CD8-positive, alpha-beta T cell (primary cell): ENCODE measurements at regions of chr7 and their contacts with region 1.

Region 1: DNA sequence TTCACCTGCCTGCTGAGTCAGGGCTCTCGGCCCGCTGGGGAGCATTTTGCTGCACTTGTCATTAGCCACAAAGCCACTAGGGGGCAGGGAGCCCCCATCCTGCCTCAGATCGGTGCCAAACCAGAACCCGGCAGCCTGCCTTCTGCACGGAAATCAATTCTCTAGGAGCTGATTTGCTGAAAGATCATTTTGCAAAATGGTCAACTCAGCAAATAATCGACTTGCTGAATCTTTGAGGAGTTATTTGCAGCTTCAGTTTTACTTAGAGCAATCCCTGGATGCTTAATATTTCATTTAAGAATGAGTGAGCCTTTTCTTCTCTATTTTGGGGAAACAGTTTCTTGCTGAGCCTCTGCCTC is 1.7 kb upstream of the GIMAP8 start:
- DNase-seq: peak; percentile 75 to 94 (median 89)
- ATAC-seq: peak; percentile 59
- H3K4me3 ChIP-seq: peak overlapping the region; percentile 9 to 32
- H3K4me3 Mint-ChIP-seq: peak overlapping the region; percentile 99
- H3K27ac ChIP-seq: peak overlapping the region; percentile 67 to 82
- H3K27ac Mint-ChIP-seq: peak overlapping the region; percentile 95
- H3K4me1 ChIP-seq: peaks cover 31% of the 10 kb centered on the region
- H3K4me1 Mint-ChIP-seq: peaks cover 58% of the 10 kb centered on the region
- H3K27me3 ChIP-seq: no peaks in the 10 kb centered on the region
- H3K27me3 Mint-ChIP-seq: no peaks in the 10 kb centered on the region
- CTCF ChIP-seq: peak; percentile 90

Region 2: DNA sequence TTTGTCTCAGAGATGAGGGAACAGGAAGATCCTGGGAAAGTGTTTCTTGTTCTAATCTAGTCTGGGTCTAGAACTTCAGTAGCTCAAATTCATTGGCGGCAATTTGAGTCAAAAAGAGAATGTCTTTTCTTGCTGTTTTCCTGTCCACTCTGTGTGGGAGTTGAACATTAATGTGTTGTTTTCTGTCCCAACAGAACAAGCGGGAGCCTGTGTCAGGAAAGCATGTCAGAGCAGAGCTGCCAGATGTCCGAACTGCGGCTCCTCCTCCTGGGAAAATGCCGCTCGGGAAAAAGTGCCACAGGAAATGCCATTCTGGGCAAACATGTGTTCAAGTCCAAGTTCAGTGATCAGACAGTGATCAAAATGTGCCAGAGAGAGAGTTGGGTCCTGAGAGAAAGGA is 17.7 kb after region 1 on chr7:
- CTCF ChIA-PET with region 1: interaction called, 10 read pairs
- POLR2A ChIA-PET with region 1: interaction called, 14 read pairs
- intact Hi-C with region 1: loop called in 1 of 2 experiments (anchors 2 kb)
- DNase-seq: no peak
- ATAC-seq: no peak
- H3K4me3 ChIP-seq: no peak overlapping the region
- H3K4me3 Mint-ChIP-seq: peak overlapping the region; percentile 23
- H3K27ac ChIP-seq: peak overlapping the region in 1 of 2 experiments; percentile 17
- H3K27ac Mint-ChIP-seq: peak overlapping the region; percentile 53
- H3K4me1 ChIP-seq: peaks cover 73% of the 10 kb centered on the region
- H3K4me1 Mint-ChIP-seq: peaks cover 82% of the 10 kb centered on the region
- H3K27me3 ChIP-seq: no peaks in the 10 kb centered on the region
- H3K27me3 Mint-ChIP-seq: no peaks in the 10 kb centered on the region
- CTCF ChIP-seq: no peak

Region 3: GRCh38 chr7:150502519-150502918 is 53.8 kb after region 1 on chr7:
- CTCF ChIA-PET with region 1: interaction called, 12 read pairs
- POLR2A ChIA-PET with region 1: interaction called, 21 read pairs
- intact Hi-C with region 1: no loop called
- DNase-seq: peak in 5 of 9 experiments; percentile 29 to 77 (median 61)
- ATAC-seq: peak; percentile 92
- H3K4me3 ChIP-seq: peak overlapping the region in 1 of 2 experiments; percentile 27
- H3K4me3 Mint-ChIP-seq: peak overlapping the region; percentile 23
- H3K27ac ChIP-seq: peak overlapping the region; percentile 22 to 61
- H3K27ac Mint-ChIP-seq: peak overlapping the region; percentile 86
- H3K4me1 ChIP-seq: peaks cover 46% of the 10 kb centered on the region
- H3K4me1 Mint-ChIP-seq: peaks cover 78% of the 10 kb centered on the region
- H3K27me3 ChIP-seq: no peaks in the 10 kb centered on the region
- H3K27me3 Mint-ChIP-seq: no peaks in the 10 kb centered on the region
- CTCF ChIP-seq: no peak

Region 4: GRCh38 chr7:150520145-150520544 is 71.4 kb after region 1 on chr7:
- CTCF ChIA-PET with region 1: interaction called, 192 read pairs
- POLR2A ChIA-PET with region 1: interaction called, 483 read pairs
- intact Hi-C with region 1: loop called in 1 of 2 experiments (anchors 2 kb)
- DNase-seq: peak in 6 of 9 experiments; percentile 9 to 75 (median 33)
- ATAC-seq: peak; percentile 27
- H3K4me3 ChIP-seq: peak overlapping the region; percentile 58 to 76
- H3K4me3 Mint-ChIP-seq: peak overlapping the region; percentile 100
- H3K27ac ChIP-seq: peak overlapping the region; percentile 58 to 75
- H3K27ac Mint-ChIP-seq: peak overlapping the region; percentile 91
- H3K4me1 ChIP-seq: peaks cover 12% of the 10 kb centered on the region
- H3K4me1 Mint-ChIP-seq: peaks cover 44% of the 10 kb centered on the region
- H3K27me3 ChIP-seq: no peaks in the 10 kb centered on the region
- H3K27me3 Mint-ChIP-seq: no peaks in the 10 kb centered on the region
- CTCF ChIP-seq: no peak

Region 5: DNA sequence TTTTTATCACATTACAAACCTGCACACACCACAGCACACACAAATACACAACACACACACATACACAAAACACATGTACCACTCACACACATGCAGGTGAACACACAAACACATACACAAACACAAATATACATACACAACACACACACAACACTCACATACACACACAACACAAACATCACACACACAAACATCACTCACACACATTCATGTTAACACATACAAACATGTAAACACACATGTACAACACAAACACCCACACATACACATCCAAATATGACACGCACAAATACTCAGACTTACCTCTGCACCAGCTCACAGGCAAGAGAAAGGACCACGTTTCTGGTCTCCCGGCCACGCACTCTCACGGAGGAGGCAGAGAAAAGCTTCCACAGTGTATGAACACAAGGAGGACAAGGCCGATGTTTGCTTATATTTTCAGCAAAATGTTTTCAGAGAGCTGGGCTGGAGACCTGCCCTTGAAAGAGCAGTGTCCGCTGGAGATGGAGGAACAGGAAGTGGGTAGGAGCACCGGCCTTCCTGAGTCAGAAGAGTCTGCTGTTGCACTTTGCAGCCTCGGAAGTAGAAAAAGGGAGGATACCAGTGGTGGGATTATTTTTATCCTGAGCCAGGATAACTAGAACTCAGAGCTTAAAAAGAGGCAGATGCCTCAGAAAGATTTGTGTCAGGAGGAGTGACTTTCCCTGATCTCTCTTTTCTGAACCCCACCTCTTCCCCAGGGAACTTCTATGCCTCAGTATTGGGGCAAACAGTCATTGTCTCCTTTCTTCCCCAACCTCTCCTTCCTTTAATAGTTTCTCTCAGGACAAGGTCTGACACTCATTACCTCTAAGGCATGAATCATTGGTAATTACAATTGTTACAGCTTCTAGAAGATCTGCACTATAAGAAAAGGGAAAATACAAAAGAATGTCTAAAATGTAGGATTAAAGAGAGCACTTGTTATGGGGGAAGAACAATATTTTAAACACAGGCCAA is 183.4 kb after region 1 on chr7 and contains the start of gene GIMAP6:
- CTCF ChIA-PET with region 1: interaction called, 10 read pairs
- POLR2A ChIA-PET with region 1: interaction called, 19 read pairs
- intact Hi-C with region 1: loop called (anchors 2 kb)
- DNase-seq: peak in 8 of 9 experiments; percentile 33 to 79 (median 50)
- ATAC-seq: peak; percentile 61
- H3K4me3 ChIP-seq: peak within 1 kb of the TSS; percentile 82 to 85
- H3K4me3 Mint-ChIP-seq: peak within 1 kb of the TSS; percentile 97
- H3K27ac ChIP-seq: peak within 1 kb of the TSS; percentile 58 to 83
- H3K27ac Mint-ChIP-seq: peak within 1 kb of the TSS; percentile 96
- H3K4me1 ChIP-seq: peaks cover 54% of the 10 kb centered on the region
- H3K4me1 Mint-ChIP-seq: peaks cover 86% of the 10 kb centered on the region
- H3K27me3 ChIP-seq: no peaks in the 10 kb centered on the region
- H3K27me3 Mint-ChIP-seq: no peaks in the 10 kb centered on the region
- CTCF ChIP-seq: no peak
- total RNA-seq, gene GIMAP6: 10.5 to 10.8 TPM

Region 6: GRCh38 chr7:150685219-150686029 is 236.7 kb after region 1 on chr7 and contains the start of gene GIMAP2:
- CTCF ChIA-PET with region 1: interaction called, 11 read pairs
- POLR2A ChIA-PET with region 1: interaction called, 27 read pairs
- intact Hi-C with region 1: no loop called
- DNase-seq: peak in 3 of 9 experiments; percentile 26 to 81 (median 68)
- ATAC-seq: peak; percentile 77
- H3K4me3 ChIP-seq: peak within 1 kb of the TSS; percentile 62 to 69
- H3K4me3 Mint-ChIP-seq: peak within 1 kb of the TSS; percentile 96
- H3K27ac ChIP-seq: peak within 1 kb of the TSS; percentile 66 to 81
- H3K27ac Mint-ChIP-seq: peak within 1 kb of the TSS; percentile 99
- H3K4me1 ChIP-seq: peaks cover 54% of the 10 kb centered on the region
- H3K4me1 Mint-ChIP-seq: peaks cover 82% of the 10 kb centered on the region
- H3K27me3 ChIP-seq: no peaks in the 10 kb centered on the region
- H3K27me3 Mint-ChIP-seq: no peaks in the 10 kb centered on the region
- CTCF ChIP-seq: no peak
- total RNA-seq, gene GIMAP2: 58.4 to 58.8 TPM

Region 7: GRCh38 chr7:150753826-150754603 is 305.2 kb after region 1 on chr7:
- CTCF ChIA-PET with region 1: interaction called, 86 read pairs
- POLR2A ChIA-PET with region 1: interaction called, 89 read pairs
- intact Hi-C with region 1: loop called (anchors 1 kb)
- DNase-seq: peak in 2 of 9 experiments; percentile 57 to 73
- ATAC-seq: peak; percentile 8
- H3K4me3 ChIP-seq: no peak overlapping the region
- H3K4me3 Mint-ChIP-seq: peak overlapping the region; percentile 19
- H3K27ac ChIP-seq: peak overlapping the region in 1 of 2 experiments; percentile 83
- H3K27ac Mint-ChIP-seq: peak overlapping the region; percentile 94
- H3K4me1 ChIP-seq: peaks cover 76% of the 10 kb centered on the region
- H3K4me1 Mint-ChIP-seq: peaks cover 72% of the 10 kb centered on the region
- H3K27me3 ChIP-seq: no peaks in the 10 kb centered on the region
- H3K27me3 Mint-ChIP-seq: no peaks in the 10 kb centered on the region
- CTCF ChIP-seq: no peak